GM12878 (cell line): ENCODE measurements at regions of chr3 and their contacts with region 1.

Region 1: DNA sequence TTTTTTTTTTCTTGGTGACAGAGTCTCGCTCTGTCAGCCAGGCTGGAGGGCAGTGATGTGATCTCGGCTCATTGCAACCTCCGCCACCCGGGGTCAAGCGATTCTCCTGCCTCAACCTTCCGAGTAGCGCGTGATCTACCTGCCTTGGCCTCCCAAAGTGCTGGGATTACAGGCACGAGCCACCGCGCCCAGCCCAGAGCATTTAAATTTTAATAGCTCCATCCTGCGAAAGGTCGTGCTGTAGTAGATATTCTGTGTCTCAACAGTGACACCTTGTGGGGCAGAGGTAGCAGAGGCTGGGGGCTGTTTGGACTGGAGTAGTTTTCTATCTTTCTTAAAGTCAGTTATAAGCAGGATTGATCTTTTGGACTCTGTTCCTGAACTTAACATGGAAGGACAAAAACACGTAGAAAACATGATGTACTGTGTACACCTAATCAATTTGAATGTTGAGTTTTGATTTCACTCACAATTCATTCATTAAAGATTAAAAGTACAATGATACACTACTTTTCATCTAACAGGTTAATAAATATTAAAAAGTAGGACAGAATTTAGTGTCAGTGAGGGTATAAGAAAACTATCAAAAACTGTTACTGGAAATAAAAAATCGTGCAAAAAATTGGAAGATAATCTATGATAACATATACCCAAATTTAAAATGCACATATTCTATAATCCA is 11.0 kb upstream of the PDCD6IP start:
- DNase-seq: no peak
- ATAC-seq: peak; percentile 93
- H3K4me3 ChIP-seq: peak overlapping the region; percentile 50; the same call in 1 of the 2 replicates
- H3K27ac ChIP-seq: no peak overlapping the region
- H3K4me1 ChIP-seq: peaks cover 4% of the 10 kb centered on the region; the same call in 1 of the 2 replicates
- H3K27me3 ChIP-seq: no peaks in the 10 kb centered on the region
- CTCF ChIP-seq: peak; percentile 75 to 89 (median 83)
- EP300 ChIP-seq: no peak
- POLR2A ChIP-seq: no peak
- RAD21 ChIP-seq: peak; percentile 86

Region 2: DNA sequence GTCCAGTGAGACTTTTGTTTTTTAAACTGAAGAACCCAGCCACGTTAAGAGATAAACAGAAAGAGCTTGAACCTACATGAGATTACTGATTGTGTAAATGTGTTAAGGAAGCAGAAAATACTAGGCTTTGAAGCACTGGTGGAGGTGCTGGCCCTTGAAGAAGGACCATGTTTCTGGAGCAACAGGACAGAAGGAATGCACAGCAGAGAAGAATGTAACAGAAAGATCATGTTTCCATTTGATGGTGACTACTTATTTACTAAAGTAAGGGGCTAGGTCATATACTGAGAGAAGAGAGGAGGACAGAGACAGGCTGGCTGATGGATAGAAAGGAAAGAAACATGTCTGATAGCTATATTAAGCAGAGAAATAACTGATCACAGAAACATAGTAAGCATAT is 158.2 kb before region 1 on chr3:
- CTCF ChIA-PET with region 1: interaction called, 55 read pairs
- POLR2A ChIA-PET with region 1: interaction called, 3 read pairs
- RAD21 ChIA-PET with region 1: interaction called, 7 read pairs
- SMC1A ChIA-PET with region 1: interaction called, 8 read pairs
- in situ Hi-C with region 1: no loop called
- intact Hi-C with region 1: no loop called
- DNase-seq: no peak
- ATAC-seq: no peak
- H3K4me3 ChIP-seq: no peak overlapping the region
- H3K27ac ChIP-seq: no peak overlapping the region
- H3K4me1 ChIP-seq: no peaks in the 10 kb centered on the region
- H3K27me3 ChIP-seq: no peaks in the 10 kb centered on the region
- CTCF ChIP-seq: no peak
- EP300 ChIP-seq: no peak
- POLR2A ChIP-seq: no peak
- RAD21 ChIP-seq: no peak

Region 3: DNA sequence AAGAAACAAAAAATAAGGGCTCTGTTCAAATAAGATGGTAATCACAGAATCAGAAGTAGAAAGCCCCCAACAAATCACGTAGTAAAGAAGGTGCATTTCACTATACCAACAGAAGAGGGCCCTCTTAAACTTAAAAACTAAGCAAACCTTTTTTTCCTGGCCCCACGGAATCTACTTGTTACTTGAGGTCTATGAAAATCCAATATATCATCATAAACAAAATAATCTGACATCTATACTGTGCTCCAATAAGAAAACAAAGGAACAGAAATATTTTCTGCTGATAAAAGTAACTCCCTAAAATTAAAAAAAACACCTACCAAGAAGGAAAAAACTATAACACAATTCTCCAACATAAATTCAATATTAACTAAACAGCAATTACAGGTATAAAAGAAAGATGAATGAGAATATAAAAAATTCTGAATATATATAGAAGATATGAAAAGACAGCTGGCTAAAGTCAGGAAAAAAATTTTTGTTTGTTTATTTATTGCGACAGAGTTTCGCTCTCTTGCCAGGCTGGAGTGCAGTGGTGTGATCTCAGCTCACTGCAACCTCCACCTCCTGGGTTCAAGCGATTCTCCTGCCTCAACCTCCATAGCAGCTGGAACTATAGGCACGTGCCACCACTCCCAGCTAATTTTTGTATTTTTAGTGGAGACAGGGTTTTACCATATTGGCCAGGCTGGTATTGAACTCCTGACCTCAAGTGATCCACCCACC is 151.2 kb before region 1 on chr3:
- CTCF ChIA-PET with region 1: interaction called, 66 read pairs
- POLR2A ChIA-PET with region 1: interaction called, 3 read pairs
- RAD21 ChIA-PET with region 1: interaction called, 20 read pairs
- SMC1A ChIA-PET with region 1: interaction called, 20 read pairs
- in situ Hi-C with region 1: loop called (anchors 5 kb)
- intact Hi-C with region 1: loop called (anchors 1 kb)
- DNase-seq: no peak
- ATAC-seq: peak; percentile 62
- H3K4me3 ChIP-seq: no peak overlapping the region
- H3K27ac ChIP-seq: no peak overlapping the region
- H3K4me1 ChIP-seq: no peaks in the 10 kb centered on the region
- H3K27me3 ChIP-seq: no peaks in the 10 kb centered on the region
- CTCF ChIP-seq: peak; percentile 42 to 51 (median 50); a peak in 5 of 6 replicates
- EP300 ChIP-seq: no peak
- POLR2A ChIP-seq: no peak
- RAD21 ChIP-seq: peak; percentile 80

Region 4: GRCh38 chr3:33658991-33659848 is 128.2 kb before region 1 on chr3:
- CTCF ChIA-PET with region 1: interaction called, 14 read pairs
- POLR2A ChIA-PET with region 1: no interaction called
- RAD21 ChIA-PET with region 1: interaction called, 7 read pairs
- SMC1A ChIA-PET with region 1: no interaction called
- in situ Hi-C with region 1: no loop called
- intact Hi-C with region 1: no loop called
- DNase-seq: peak; percentile 23
- ATAC-seq: peak; percentile 97
- H3K4me3 ChIP-seq: peak overlapping the region; percentile 66
- H3K27ac ChIP-seq: peak overlapping the region; percentile 48
- H3K4me1 ChIP-seq: peaks cover 4% of the 10 kb centered on the region; the same call in 1 of the 2 replicates
- H3K27me3 ChIP-seq: no peaks in the 10 kb centered on the region
- CTCF ChIP-seq: no peak
- EP300 ChIP-seq: no peak
- POLR2A ChIP-seq: peak; percentile 49
- RAD21 ChIP-seq: no peak

Region 5: GRCh38 chr3:33717866-33718594 is 69.4 kb before region 1 on chr3 and contains the start of gene CLASP2:
- CTCF ChIA-PET with region 1: interaction called, 11 read pairs
- POLR2A ChIA-PET with region 1: interaction called, 3 read pairs
- RAD21 ChIA-PET with region 1: interaction called, 3 read pairs
- SMC1A ChIA-PET with region 1: interaction called, 6 read pairs
- in situ Hi-C with region 1: no loop called
- intact Hi-C with region 1: no loop called
- DNase-seq: peak; percentile 42
- ATAC-seq: peak; percentile 91
- H3K4me3 ChIP-seq: peak within 1 kb of the TSS; percentile 77
- H3K27ac ChIP-seq: peak within 1 kb of the TSS; percentile 82
- H3K4me1 ChIP-seq: no peaks in the 10 kb centered on the region
- H3K27me3 ChIP-seq: no peaks in the 10 kb centered on the region
- CTCF ChIP-seq: no peak
- EP300 ChIP-seq: no peak
- POLR2A ChIP-seq: peak; percentile 89
- RAD21 ChIP-seq: no peak
- polyA plus RNA-seq, gene CLASP2: 4.0 to 5.3 TPM

Region 6: DNA sequence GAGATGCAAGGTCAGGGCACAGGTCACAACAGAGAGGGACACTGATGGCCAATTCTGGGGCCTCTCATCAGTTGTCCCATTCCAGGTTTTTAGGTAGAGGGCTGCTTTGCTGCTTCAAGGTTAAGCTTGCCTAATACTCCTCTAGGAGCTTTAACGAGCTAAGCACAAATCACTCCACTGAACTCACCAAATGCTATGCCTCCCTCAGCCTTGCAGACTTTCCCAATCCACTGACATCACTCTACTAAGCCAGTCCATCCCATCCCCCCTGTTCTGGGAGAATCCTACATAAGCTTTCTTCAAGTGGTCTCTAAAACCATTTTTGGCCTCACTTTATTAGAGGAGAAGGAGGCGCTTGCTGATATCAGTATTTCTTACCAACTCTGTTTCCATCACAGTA is 13.8 kb before region 1 on chr3:
- CTCF ChIA-PET with region 1: interaction called, 42 read pairs
- POLR2A ChIA-PET with region 1: no interaction called
- RAD21 ChIA-PET with region 1: interaction called, 9 read pairs
- SMC1A ChIA-PET with region 1: interaction called, 32 read pairs
- in situ Hi-C with region 1: no loop called
- intact Hi-C with region 1: no loop called
- DNase-seq: no peak
- ATAC-seq: no peak
- H3K4me3 ChIP-seq: no peak overlapping the region
- H3K27ac ChIP-seq: no peak overlapping the region
- H3K4me1 ChIP-seq: no peaks in the 10 kb centered on the region
- H3K27me3 ChIP-seq: no peaks in the 10 kb centered on the region
- CTCF ChIP-seq: no peak
- EP300 ChIP-seq: no peak
- POLR2A ChIP-seq: no peak
- RAD21 ChIP-seq: no peak

Region 7: DNA sequence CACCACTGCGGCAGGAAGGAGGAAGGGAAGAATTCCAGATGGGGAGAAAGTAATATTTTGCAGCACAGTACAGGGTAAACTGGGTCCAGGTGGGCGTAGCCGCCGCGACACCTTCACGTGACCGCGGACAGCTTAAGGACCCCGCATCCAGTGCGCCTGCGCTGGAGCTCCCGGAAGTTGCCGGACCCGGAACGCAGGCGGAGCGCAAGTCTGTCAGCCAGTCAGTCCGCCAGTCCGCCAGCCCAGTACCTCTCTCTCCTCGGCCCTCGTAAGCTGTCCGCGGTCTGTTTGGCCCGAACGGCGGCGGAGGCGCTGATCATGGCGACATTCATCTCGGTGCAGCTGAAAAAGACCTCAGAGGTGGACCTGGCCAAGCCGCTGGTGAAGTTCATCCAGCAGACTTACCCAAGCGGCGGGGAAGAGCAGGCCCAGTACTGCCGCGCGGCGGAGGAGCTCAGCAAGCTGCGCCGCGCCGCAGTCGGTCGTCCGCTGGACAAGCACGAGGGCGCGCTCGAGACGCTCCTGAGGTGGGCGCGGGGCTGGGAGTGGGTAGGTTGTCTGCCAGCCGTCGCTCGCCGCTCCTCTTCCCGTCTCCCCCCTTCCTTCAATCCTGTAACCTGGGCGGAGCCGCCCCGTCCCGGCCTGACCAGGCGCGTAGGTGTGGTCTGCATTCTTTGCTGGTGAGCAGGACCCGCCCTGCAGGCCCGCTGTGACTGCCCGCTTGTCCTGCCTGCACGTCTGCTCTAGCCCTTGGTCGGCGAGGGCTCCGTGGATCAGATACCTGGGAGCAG is 11.1 kb after region 1 on chr3 and contains the start of gene PDCD6IP:
- CTCF ChIA-PET with region 1: interaction called, 43 read pairs
- POLR2A ChIA-PET with region 1: interaction called, 7 read pairs
- RAD21 ChIA-PET with region 1: interaction called, 16 read pairs
- SMC1A ChIA-PET with region 1: interaction called, 20 read pairs
- in situ Hi-C with region 1: no loop called
- intact Hi-C with region 1: no loop called
- DNase-seq: peak; percentile 74
- ATAC-seq: peak; percentile 91
- H3K4me3 ChIP-seq: peak within 1 kb of the TSS; percentile 96
- H3K27ac ChIP-seq: peak within 1 kb of the TSS; percentile 83
- H3K4me1 ChIP-seq: no peaks in the 10 kb centered on the region
- H3K27me3 ChIP-seq: no peaks in the 10 kb centered on the region
- CTCF ChIP-seq: peak in 2 of 3 experiments; percentile 12 to 20; a peak in 3 of 6 replicates
- EP300 ChIP-seq: no peak
- POLR2A ChIP-seq: peak; percentile 99
- RAD21 ChIP-seq: no peak
- polyA plus RNA-seq, gene PDCD6IP: 16.0 to 20.0 TPM